PC-9 (cell line): ENCODE measurements at regions of chr6 and their contacts with region 1.

Region 1: GRCh38 chr6:75532515-75532914 is 38.9 kb upstream of the FILIP1 start:
- DNase-seq: peak; percentile 57 to 58
- H3K4me3 ChIP-seq: no peak overlapping the region
- H3K27ac ChIP-seq: no peak overlapping the region
- H3K4me1 ChIP-seq: peaks cover 10% of the 10 kb centered on the region
- H3K27me3 ChIP-seq: no peaks in the 10 kb centered on the region
- CTCF ChIP-seq: no peak

Region 2: GRCh38 chr6:73752943-73753342 is 1779.6 kb before region 1 on chr6:
- CTCF ChIA-PET with region 1: no interaction called
- POLR2A ChIA-PET with region 1: no interaction called
- intact Hi-C with region 1: loop called (anchors 10 kb)
- DNase-seq: no peak
- H3K4me3 ChIP-seq: no peak overlapping the region
- H3K27ac ChIP-seq: no peak overlapping the region
- H3K4me1 ChIP-seq: no peaks in the 10 kb centered on the region
- H3K27me3 ChIP-seq: no peaks in the 10 kb centered on the region
- CTCF ChIP-seq: no peak

Region 3: DNA sequence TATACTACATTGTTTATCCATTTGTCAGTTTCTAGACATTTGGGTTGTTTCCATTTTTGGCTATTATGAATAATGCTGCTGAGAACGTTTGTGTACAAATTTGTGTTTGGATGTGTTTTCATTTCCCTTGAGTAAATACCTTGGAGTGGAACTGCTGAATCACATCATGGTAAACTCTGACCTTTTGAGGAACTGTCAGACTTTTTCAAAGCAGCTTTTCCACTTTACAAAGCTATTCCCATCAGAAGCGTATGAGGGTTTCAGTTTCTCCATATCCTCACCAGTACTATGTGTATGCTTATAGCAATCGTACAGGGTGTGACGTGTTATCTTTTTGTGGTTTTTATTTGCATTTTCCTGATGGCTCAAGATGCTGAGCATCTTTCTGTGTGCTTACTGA is 320.2 kb after region 1 on chr6:
- CTCF ChIA-PET with region 1: no interaction called
- POLR2A ChIA-PET with region 1: no interaction called
- intact Hi-C with region 1: no loop called
- DNase-seq: peak in 1 of 2 experiments; percentile 51
- H3K4me3 ChIP-seq: no peak overlapping the region
- H3K27ac ChIP-seq: peak overlapping the region; percentile 37
- H3K4me1 ChIP-seq: peaks cover 52% of the 10 kb centered on the region
- H3K27me3 ChIP-seq: no peaks in the 10 kb centered on the region
- CTCF ChIP-seq: no peak